Natural killer cell (primary cell): ENCODE measurements at regions of chr11 and their contacts with region 1.

Region 1: DNA sequence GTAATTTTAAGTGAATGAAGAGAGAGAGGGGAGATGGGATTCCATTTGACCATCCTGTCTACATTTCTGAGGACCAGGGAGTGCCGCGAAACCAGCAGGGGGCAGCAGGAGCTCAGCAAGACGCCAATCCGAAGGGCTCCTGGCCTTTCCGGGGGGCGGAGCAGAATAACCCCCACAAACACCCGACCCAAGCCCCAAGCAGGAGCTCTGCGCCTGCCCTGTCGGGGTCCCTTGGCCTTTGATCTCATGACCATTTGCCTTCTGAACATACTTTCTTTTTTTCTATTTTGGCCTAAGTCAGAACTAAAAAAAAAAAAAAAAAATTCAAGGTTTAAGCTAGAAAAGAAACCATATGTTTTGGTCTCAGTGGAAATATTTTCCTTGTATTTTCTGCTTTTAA is 21.9 kb upstream of the SCN2B start:
- DNase-seq: peak; percentile 79 to 90
- ATAC-seq: peak; percentile 75 to 91 (median 77)
- H3K4me3 ChIP-seq: no peak overlapping the region
- H3K4me3 Mint-ChIP-seq: no peak overlapping the region
- H3K27ac ChIP-seq: no peak overlapping the region
- H3K27ac Mint-ChIP-seq: peak overlapping the region in 1 of 2 donors; percentile 81
- H3K4me1 ChIP-seq: peaks cover 32% of the 10 kb centered on the region
- H3K4me1 Mint-ChIP-seq: peaks cover 5 to 11% of the 10 kb centered on the region in 2 donors
- H3K27me3 ChIP-seq: no peaks in the 10 kb centered on the region
- H3K27me3 Mint-ChIP-seq: no peaks in the 10 kb centered on the region
- CTCF ChIP-seq: peak; percentile 96

Region 2: DNA sequence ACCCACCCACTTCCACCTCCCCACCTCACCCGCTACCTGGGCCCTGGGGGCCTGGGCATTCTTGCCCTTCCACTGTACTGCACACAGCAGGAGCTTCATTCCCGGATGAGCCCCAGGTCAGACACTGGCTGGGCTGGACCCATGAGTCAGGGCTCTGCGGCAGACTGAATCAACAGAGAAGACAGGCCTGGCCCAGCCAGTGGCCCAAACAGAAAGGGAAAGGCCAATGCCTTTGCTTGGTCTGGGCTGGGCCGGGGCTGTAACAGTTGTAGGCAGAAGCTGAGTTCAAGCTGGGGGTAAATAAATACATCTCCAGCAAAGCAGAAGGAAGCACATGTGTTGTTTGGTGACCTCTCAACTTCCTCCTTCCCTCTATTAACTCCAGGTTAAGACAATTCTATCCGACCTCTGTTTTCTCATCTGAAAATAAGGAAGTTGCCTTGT is 109.9 kb before region 1 on chr11:
- intact Hi-C with region 1: no loop called
- DNase-seq: no peak
- ATAC-seq: peak; percentile 48 to 61 (median 52)
- H3K4me3 ChIP-seq: no peak overlapping the region
- H3K4me3 Mint-ChIP-seq: no peak overlapping the region
- H3K27ac ChIP-seq: no peak overlapping the region
- H3K27ac Mint-ChIP-seq: no peak overlapping the region
- H3K4me1 ChIP-seq: no peaks in the 10 kb centered on the region
- H3K4me1 Mint-ChIP-seq: no peaks in the 10 kb centered on the region
- H3K27me3 ChIP-seq: no peaks in the 10 kb centered on the region
- H3K27me3 Mint-ChIP-seq: peaks cover 5 to 14% of the 10 kb centered on the region in 2 donors
- CTCF ChIP-seq: no peak

Region 3: DNA sequence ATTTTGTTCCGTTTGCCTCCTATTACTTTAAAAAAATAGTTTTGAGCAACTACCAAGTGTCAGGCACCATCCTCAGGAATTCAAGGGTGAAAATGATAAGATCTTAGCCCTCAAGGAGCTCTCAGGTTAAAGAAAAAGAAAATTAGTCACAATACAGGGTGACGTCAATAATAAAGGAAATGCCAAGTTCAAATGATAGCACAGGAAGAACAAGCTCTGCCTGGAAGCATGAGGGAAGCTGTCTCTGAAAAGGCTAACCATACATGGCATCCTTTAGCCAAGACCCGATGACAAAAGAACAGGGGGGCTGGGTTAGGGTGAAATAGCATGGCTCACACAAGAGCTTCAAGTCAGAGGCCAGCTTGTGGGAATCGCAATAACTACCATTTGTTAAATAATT is 76.8 kb after region 1 on chr11:
- intact Hi-C with region 1: no loop called
- DNase-seq: no peak
- ATAC-seq: no peak
- H3K4me3 ChIP-seq: no peak overlapping the region
- H3K4me3 Mint-ChIP-seq: no peak overlapping the region
- H3K27ac ChIP-seq: no peak overlapping the region
- H3K27ac Mint-ChIP-seq: no peak overlapping the region
- H3K4me1 ChIP-seq: no peaks in the 10 kb centered on the region
- H3K4me1 Mint-ChIP-seq: no peaks in the 10 kb centered on the region
- H3K27me3 ChIP-seq: no peaks in the 10 kb centered on the region
- H3K27me3 Mint-ChIP-seq: peaks cover 16 to 20% of the 10 kb centered on the region in 2 donors
- CTCF ChIP-seq: no peak

Region 4: DNA sequence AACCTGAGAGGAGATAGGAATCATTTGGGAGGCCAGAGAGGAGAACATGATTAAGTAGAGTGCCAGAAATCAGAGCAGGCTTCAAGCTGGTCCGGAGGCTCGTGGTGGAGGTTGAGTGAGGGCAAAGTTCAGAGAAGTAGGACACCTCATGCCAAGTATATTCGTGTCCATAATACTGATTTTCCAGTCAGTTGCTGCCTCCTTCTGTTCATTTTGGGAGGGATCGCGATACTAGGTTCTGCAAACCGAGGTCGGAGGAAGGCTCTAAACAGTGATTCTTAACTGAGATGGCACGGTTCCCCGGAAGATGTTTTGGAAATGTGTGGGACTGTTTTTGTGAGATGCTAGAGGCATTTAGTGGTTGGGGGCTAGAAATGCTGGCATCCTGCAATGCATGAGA is 92.6 kb after region 1 on chr11:
- intact Hi-C with region 1: loop called (anchors 1 kb)
- DNase-seq: peak in 1 of 2 donors; percentile 77
- ATAC-seq: peak; percentile 50 to 84 (median 68)
- H3K4me3 ChIP-seq: no peak overlapping the region
- H3K4me3 Mint-ChIP-seq: no peak overlapping the region
- H3K27ac ChIP-seq: no peak overlapping the region
- H3K27ac Mint-ChIP-seq: peak overlapping the region in 1 of 2 donors; percentile 28
- H3K4me1 ChIP-seq: peaks cover 6% of the 10 kb centered on the region
- H3K4me1 Mint-ChIP-seq: peaks cover 14 to 16% of the 10 kb centered on the region in 2 donors
- H3K27me3 ChIP-seq: no peaks in the 10 kb centered on the region
- H3K27me3 Mint-ChIP-seq: peaks cover 6 to 11% of the 10 kb centered on the region in 2 donors
- CTCF ChIP-seq: peak; percentile 48

Region 5: DNA sequence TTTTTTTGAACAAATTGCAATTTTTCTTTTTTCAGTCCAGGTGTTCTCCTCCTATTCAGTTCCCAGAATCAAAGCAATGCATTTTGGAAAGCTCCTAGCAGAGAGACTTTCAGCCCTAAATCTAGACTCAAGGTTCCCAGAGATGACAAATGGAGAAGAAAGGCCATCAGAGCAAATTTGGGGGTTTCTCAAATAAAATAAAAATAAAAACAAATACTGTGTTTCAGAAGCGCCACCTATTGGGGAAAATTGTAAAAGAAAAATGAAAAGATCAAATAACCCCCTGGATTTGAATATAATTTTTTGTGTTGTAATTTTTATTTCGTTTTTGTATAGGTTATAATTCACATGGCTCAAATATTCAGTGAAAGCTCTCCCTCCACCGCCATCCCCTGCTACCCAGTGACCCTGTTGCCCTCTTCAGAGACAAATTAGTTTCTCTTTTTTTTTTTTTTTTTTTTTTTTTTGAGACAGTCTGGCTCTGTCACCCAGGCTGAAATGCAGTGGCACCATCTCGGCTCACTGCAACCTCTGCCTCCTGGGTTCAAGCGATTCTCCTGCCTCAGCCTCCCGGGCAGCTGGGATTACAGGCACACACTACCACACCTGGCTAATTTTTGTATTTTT is 154.8 kb after region 1 on chr11:
- intact Hi-C with region 1: loop called (anchors 1 kb)
- DNase-seq: peak in 1 of 2 donors; percentile 80
- ATAC-seq: peak in 2 of 3 donors; percentile 25 to 58
- H3K4me3 ChIP-seq: no peak overlapping the region
- H3K4me3 Mint-ChIP-seq: no peak overlapping the region
- H3K27ac ChIP-seq: no peak overlapping the region
- H3K27ac Mint-ChIP-seq: peak overlapping the region in 1 of 2 donors; percentile 36
- H3K4me1 ChIP-seq: peaks cover 3% of the 10 kb centered on the region
- H3K4me1 Mint-ChIP-seq: peaks cover 6 to 7% of the 10 kb centered on the region in 2 donors
- H3K27me3 ChIP-seq: no peaks in the 10 kb centered on the region
- H3K27me3 Mint-ChIP-seq: no peaks in the 10 kb centered on the region
- CTCF ChIP-seq: peak; percentile 87